BJ (cell line): ENCODE measurements at regions of chr2 and their contacts with region 1.

Region 1: GRCh38 chr2:224357098-224357901 is 44.6 kb downstream of the FAM124B start:
- DNase-seq: no peak
- H3K4me3 ChIP-seq: no peak overlapping the region
- H3K27me3 ChIP-seq: peaks cover 1% of the 10 kb centered on the region
- CTCF ChIP-seq: peak; percentile 66

Region 2: DNA sequence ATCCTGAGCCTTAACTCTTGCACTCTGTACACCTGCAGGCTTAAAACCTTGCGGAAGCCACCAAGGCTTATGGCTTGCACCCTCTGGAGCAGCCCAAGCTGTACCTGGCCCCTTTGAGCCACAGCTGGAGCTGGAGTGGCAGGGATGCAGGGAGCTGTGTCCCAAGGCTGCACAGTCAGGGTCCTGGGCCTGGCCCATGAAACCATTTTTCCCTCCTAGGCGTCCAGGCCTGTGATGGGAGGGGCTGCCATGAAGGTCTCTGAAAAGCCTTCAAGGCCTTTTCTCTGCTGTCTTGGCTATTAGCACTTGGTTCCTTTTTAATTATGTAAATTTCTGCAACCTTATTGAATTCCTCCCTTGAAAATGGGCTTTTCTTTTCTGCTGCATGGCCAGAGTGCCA is 11.8 kb before region 1 on chr2:
- CTCF ChIA-PET with region 1: no interaction called
- POLR2A ChIA-PET with region 1: no interaction called
- DNase-seq: no peak
- H3K4me3 ChIP-seq: no peak overlapping the region
- H3K27me3 ChIP-seq: no peaks in the 10 kb centered on the region
- CTCF ChIP-seq: no peak

Region 3: GRCh38 chr2:224417350-224418346 is 60.3 kb after region 1 on chr2:
- CTCF ChIA-PET with region 1: no interaction called
- POLR2A ChIA-PET with region 1: no interaction called
- DNase-seq: no peak
- H3K4me3 ChIP-seq: no peak overlapping the region
- H3K27me3 ChIP-seq: no peaks in the 10 kb centered on the region
- CTCF ChIP-seq: no peak

Region 4: GRCh38 chr2:224449212-224450147 is 92.2 kb after region 1 on chr2:
- CTCF ChIA-PET with region 1: interaction called, 14 read pairs
- POLR2A ChIA-PET with region 1: no interaction called
- DNase-seq: no peak
- H3K4me3 ChIP-seq: no peak overlapping the region
- H3K27me3 ChIP-seq: 0 out of 2 replicates have a peak, but pooled peaks cover under 1% of the 10 kb centered on the region
- CTCF ChIP-seq: peak; percentile 69

Region 5: DNA sequence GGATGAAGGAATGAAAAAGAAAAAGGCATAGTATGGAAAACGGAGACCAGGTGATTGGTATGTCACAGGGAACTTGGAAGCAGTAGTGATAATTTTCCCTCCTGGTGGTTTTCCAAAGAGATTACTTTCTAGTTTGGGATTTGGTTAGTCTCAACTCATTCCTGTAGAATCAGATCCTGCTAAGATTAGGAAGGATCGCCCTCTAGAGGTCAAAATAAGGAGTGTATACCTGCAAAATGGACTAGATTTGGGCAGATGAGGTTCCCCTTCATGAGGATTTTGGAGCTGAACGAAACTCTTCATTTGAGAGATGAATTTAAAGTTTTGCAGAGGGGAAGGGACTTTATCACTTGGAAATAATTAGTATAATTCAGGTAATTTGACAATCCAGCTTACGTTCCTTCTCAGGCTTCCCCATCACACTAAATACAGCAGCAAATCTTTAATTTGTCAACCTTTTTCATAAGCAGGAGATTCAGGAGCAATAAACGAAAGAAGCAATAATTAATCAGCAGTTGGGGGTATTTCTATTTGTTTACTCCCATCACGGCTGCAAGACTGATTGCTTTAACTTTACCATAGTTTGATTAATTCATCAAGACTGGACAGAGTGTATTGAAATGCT is 293.6 kb after region 1 on chr2:
- CTCF ChIA-PET with region 1: interaction called, 48 read pairs
- POLR2A ChIA-PET with region 1: interaction called, 5 read pairs
- DNase-seq: peak; percentile 12
- H3K4me3 ChIP-seq: no peak overlapping the region
- H3K27me3 ChIP-seq: no peaks in the 10 kb centered on the region
- CTCF ChIP-seq: peak; percentile 78

Region 6: GRCh38 chr2:224678634-224679263 is 321.4 kb after region 1 on chr2:
- CTCF ChIA-PET with region 1: no interaction called
- POLR2A ChIA-PET with region 1: no interaction called
- DNase-seq: peak; percentile 31
- H3K4me3 ChIP-seq: no peak overlapping the region
- H3K27me3 ChIP-seq: no peaks in the 10 kb centered on the region
- CTCF ChIP-seq: no peak